GM12878 (cell line): ENCODE measurements at regions of chr12 and their contacts with region 1.

Region 1: GRCh38 chr12:18430425-18431048 is 169.2 kb downstream of the PIK3C2G start:
- DNase-seq: no peak
- ATAC-seq: peak; percentile 90
- H3K4me3 ChIP-seq: no peak overlapping the region
- H3K27ac ChIP-seq: no peak overlapping the region
- H3K4me1 ChIP-seq: no peaks in the 10 kb centered on the region
- H3K27me3 ChIP-seq: no peaks in the 10 kb centered on the region
- CTCF ChIP-seq: peak; percentile 62 to 78 (median 66); a peak in 5 of 6 replicates
- EP300 ChIP-seq: no peak
- POLR2A ChIP-seq: no peak
- RAD21 ChIP-seq: peak; percentile 71

Region 2: GRCh38 chr12:18643681-18644080 is 213.1 kb after region 1 on chr12:
- CTCF ChIA-PET with region 1: no interaction called
- POLR2A ChIA-PET with region 1: no interaction called
- RAD21 ChIA-PET with region 1: no interaction called
- SMC1A ChIA-PET with region 1: no interaction called
- in situ Hi-C with region 1: no loop called
- intact Hi-C with region 1: loop called (anchors 10 kb)
- DNase-seq: no peak
- ATAC-seq: no peak
- H3K4me3 ChIP-seq: no peak overlapping the region
- H3K27ac ChIP-seq: no peak overlapping the region
- H3K4me1 ChIP-seq: no peaks in the 10 kb centered on the region
- H3K27me3 ChIP-seq: no peaks in the 10 kb centered on the region
- CTCF ChIP-seq: no peak
- EP300 ChIP-seq: no peak
- POLR2A ChIP-seq: no peak
- RAD21 ChIP-seq: no peak

Region 3: DNA sequence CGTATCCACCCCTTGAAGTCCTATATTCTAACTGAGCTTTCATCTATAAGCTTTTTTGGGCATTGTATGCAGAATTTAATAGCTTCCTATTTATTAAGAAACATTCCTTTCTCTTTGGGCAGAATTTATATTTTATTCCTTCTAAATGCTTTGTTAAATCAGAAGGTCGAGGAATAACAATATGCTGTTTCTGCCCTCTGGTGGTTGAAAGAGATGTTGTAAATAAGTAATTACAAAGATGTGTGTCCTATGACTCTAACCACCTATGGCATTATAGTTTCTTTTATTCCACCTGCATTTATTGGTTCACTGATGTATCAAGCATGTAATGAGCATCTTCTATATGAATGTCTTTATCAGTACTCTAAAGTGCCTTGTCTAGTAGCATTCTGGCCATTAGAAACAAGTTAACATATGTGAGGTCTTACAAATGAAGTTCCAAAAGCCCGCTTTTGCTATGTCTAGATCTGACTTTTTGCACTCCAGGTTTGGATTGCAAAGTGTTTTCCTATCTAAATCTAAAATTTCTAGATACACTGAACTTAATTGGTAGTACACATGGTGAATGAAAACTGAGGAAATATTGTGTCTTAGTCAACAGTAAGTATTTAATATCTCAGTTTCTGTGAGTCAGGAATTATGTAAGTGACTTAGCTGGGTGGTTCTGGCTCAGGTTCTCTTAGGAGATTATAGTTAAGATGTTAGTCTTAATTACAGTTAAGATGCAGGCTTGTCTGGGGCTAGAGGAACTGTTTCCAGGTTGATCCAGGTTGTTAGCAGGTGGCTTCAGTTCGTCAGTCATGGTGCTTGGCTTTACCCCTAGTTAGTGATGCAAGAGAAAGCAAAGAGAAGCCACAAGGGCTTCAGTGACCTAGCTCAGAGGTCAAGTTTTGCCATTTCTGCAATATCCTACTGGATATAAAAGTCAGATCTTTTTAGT is 756.5 kb after region 1 on chr12:
- CTCF ChIA-PET with region 1: interaction called, 8 read pairs
- POLR2A ChIA-PET with region 1: no interaction called
- RAD21 ChIA-PET with region 1: interaction called, 5 read pairs
- SMC1A ChIA-PET with region 1: interaction called, 3 read pairs
- in situ Hi-C with region 1: loop called (anchors 10 kb)
- intact Hi-C with region 1: loop called (anchors 2 kb)
- DNase-seq: no peak
- ATAC-seq: peak; percentile 53; the same call in 2 of the 3 replicates
- H3K4me3 ChIP-seq: no peak overlapping the region
- H3K27ac ChIP-seq: no peak overlapping the region
- H3K4me1 ChIP-seq: no peaks in the 10 kb centered on the region
- H3K27me3 ChIP-seq: no peaks in the 10 kb centered on the region
- CTCF ChIP-seq: peak in 2 of 3 experiments; percentile 40 to 52; a peak in 4 of 6 replicates
- EP300 ChIP-seq: no peak
- POLR2A ChIP-seq: no peak
- RAD21 ChIP-seq: peak; percentile 63